Gastrocnemius medialis (tissue), 4 donors: ENCODE measurements at regions of chr1 and their contacts with region 1.

Region 1: GRCh38 chr1:40257688-40258444 is at the start of gene ZMPSTE24:
- DNase-seq: peak; percentile 94 to 97
- ATAC-seq: peak; percentile 98 to 99
- H3K4me3 ChIP-seq: peak within 1 kb of the TSS; percentile 90 to 100 (median 93)
- H3K27ac ChIP-seq: peak within 1 kb of the TSS; percentile 83 to 98 (median 88)
- H3K4me1 ChIP-seq: peaks cover 29 to 45% of the 10 kb centered on the region in 2 donors
- H3K27me3 ChIP-seq: no peaks in the 10 kb centered on the region
- CTCF ChIP-seq: no peak
- POLR2A ChIP-seq: peak; percentile 60 to 69
- total RNA-seq, gene ZMPSTE24: 19.9 to 31.9 (median 24.0) TPM

Region 2: DNA sequence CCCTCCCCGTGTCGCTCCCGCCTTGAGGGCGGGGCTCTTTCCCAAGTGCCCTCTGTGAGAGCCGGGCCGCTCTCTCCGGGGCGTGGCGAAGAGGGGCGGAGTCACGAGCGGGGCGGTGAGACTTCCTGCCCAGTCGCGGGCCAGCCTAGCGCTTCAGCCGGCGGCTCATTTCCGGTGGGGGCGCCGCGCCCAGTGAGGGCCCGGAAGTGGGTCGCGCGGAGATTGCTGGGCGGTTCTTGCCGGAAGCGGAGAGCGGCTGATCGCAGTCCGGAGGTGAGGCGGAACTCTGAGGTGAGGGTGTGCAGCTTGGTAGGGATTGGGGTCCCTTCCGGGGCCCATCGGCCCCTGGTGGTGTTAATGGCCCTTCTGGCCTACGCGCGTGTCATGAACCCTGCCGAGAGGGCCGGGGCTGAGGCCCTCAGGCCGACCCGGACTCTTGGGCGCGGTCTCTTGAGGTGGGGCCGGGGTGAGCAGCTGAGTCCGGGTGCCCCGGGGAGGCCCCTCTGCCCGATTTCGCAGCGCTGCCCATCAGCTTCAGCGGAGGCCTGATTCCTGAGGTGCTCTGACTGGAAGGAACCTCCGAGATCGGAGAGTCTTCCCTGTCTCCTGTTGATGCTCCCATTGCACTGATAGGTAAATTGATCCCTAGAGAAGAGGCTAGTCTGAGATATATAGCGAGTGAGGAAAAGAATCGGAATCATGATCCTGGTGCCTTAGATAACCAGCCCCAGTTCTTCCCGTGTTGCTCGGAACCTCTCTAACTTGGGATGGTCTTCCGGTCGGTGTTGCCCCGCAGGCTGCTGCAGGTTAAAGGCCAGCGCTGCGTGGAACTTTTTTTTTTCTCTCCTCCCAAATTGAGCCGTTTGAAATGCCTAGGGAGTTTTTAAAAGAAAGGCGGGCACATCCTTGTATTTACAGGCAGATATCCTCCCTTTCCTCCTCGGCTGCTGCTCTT is 217.1 kb before region 1 on chr1 and contains the start of gene CAP1:
- in situ Hi-C with region 1: no loop called
- intact Hi-C with region 1: loop called (anchors 5 kb)
- DNase-seq: peak; percentile 98 to 99
- ATAC-seq: peak; percentile 86
- H3K4me3 ChIP-seq: peak within 1 kb of the TSS; percentile 96 to 98 (median 98)
- H3K27ac ChIP-seq: peak within 1 kb of the TSS; percentile 95 to 100 (median 99)
- H3K4me1 ChIP-seq: peaks cover 44 to 59% of the 10 kb centered on the region in 2 donors
- H3K27me3 ChIP-seq: no peaks in the 10 kb centered on the region
- CTCF ChIP-seq: peak in 1 of 5 experiments; percentile 8
- POLR2A ChIP-seq: peak; percentile 72 to 75
- total RNA-seq, gene CAP1: 35.5 to 67.0 (median 48.7) TPM

Region 3: DNA sequence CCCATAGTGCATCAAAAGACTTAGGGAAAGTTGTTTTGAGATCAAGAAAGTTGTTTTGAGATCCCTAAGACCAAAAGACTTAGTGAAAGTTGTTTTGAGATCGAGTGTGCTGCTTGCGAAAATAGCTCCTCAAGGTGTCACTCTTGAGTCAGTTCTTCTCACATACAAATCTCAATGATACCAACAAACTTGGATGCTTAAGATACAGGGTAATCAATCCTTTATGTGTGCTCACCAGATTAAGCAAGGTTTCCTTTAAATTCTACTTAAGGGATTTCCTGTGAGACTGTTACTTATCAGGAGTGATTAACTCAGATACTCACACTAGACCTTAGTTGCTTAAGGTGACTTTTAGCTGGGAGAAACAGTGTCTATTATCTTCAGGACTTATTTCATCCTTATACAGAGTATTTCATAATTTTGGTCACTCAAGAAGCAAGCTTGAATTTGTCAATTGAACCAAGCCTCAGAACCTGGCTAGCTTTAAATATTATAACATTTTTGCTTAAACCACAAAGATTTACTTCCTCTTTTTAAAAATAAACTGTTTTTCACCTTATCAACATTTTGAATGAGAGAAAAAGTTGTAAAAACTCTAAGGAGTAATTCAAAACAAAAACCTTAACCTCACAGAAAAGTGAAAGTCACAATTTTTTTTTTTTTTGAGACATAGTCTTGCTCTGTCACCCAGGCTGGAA is 104.6 kb before region 1 on chr1:
- in situ Hi-C with region 1: loop called in 1 of 4 experiments (anchors 10 kb)
- intact Hi-C with region 1: no loop called
- DNase-seq: no peak
- ATAC-seq: peak in 1 of 2 donors; percentile 51
- H3K4me3 ChIP-seq: no peak overlapping the region
- H3K27ac ChIP-seq: no peak overlapping the region
- H3K4me1 ChIP-seq: peaks cover 0 to 3% of the 10 kb centered on the region in 2 donors
- H3K27me3 ChIP-seq: no peaks in the 10 kb centered on the region
- CTCF ChIP-seq: peak in 4 of 5 experiments; percentile 14 to 72 (median 58)
- POLR2A ChIP-seq: no peak

Region 4: DNA sequence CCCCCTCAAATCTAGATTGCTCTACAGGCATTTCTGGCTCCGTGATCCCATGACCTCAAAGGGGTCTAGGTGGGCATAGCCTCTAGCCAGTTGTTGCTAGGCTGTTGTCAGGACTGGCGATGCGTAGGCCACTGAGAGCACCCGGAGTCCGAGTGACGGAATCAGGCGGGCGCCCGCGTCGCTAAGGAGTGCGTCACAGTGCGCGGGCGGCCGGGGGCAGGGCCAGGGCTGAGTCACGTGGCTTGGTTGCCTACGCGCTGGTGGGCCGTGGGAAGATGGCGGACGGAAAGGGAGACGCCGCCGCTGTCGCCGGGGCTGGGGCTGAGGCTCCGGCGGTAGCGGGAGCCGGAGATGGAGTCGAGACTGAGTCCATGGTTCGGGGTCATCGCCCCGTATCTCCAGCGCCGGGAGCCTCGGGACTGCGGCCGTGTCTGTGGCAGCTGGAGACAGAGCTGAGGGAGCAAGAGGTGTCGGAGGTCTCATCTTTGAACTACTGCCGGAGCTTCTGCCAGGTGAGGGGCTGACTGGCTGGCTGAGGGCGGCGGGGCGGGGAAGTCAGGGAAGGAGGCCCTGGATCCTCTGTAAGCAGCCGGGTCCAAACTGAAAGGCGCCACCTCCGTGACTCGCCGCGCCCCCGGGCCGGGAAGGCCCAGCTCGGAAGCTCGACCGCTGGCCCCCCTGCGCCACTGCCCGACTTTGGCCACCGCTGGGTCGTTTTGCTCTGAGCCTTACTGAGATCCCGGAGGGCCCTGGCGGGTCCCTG is 96.6 kb before region 1 on chr1 and contains the start of gene RLF:
- in situ Hi-C with region 1: loop called in 3 of 4 experiments (anchors 5 to 10 kb)
- intact Hi-C with region 1: loop called (anchors 2 kb)
- DNase-seq: peak; percentile 88 to 92
- ATAC-seq: peak; percentile 95 to 97
- H3K4me3 ChIP-seq: peak within 1 kb of the TSS; percentile 73 to 98 (median 89)
- H3K27ac ChIP-seq: peak within 1 kb of the TSS; percentile 92 to 99 (median 96)
- H3K4me1 ChIP-seq: peaks cover 44 to 45% of the 10 kb centered on the region in 2 donors
- H3K27me3 ChIP-seq: no peaks in the 10 kb centered on the region
- CTCF ChIP-seq: no peak
- POLR2A ChIP-seq: peak; percentile 97 to 98
- total RNA-seq, gene RLF: 12.3 to 15.9 (median 15.0) TPM

Region 5: GRCh38 chr1:40197656-40198055 is 60.2 kb before region 1 on chr1:
- in situ Hi-C with region 1: no loop called
- intact Hi-C with region 1: no loop called
- DNase-seq: no peak
- ATAC-seq: no peak
- H3K4me3 ChIP-seq: no peak overlapping the region
- H3K27ac ChIP-seq: no peak overlapping the region
- H3K4me1 ChIP-seq: no peaks in the 10 kb centered on the region
- H3K27me3 ChIP-seq: no peaks in the 10 kb centered on the region
- CTCF ChIP-seq: no peak
- POLR2A ChIP-seq: no peak

Region 6: GRCh38 chr1:40373338-40374283 is 115.7 kb after region 1 on chr1 and contains the start of gene SMAP2:
- in situ Hi-C with region 1: no loop called
- intact Hi-C with region 1: loop called (anchors 5 kb)
- DNase-seq: peak; percentile 93 to 95
- ATAC-seq: peak; percentile 91 to 94
- H3K4me3 ChIP-seq: peak within 1 kb of the TSS; percentile 90 to 98 (median 95)
- H3K27ac ChIP-seq: peak within 1 kb of the TSS; percentile 82 to 93 (median 86)
- H3K4me1 ChIP-seq: peaks cover 7 to 18% of the 10 kb centered on the region in 2 donors
- H3K27me3 ChIP-seq: no peaks in the 10 kb centered on the region
- CTCF ChIP-seq: no peak
- POLR2A ChIP-seq: peak; percentile 79 to 82
- total RNA-seq, gene SMAP2: 14.9 to 121 (median 47.5) TPM

Region 7: DNA sequence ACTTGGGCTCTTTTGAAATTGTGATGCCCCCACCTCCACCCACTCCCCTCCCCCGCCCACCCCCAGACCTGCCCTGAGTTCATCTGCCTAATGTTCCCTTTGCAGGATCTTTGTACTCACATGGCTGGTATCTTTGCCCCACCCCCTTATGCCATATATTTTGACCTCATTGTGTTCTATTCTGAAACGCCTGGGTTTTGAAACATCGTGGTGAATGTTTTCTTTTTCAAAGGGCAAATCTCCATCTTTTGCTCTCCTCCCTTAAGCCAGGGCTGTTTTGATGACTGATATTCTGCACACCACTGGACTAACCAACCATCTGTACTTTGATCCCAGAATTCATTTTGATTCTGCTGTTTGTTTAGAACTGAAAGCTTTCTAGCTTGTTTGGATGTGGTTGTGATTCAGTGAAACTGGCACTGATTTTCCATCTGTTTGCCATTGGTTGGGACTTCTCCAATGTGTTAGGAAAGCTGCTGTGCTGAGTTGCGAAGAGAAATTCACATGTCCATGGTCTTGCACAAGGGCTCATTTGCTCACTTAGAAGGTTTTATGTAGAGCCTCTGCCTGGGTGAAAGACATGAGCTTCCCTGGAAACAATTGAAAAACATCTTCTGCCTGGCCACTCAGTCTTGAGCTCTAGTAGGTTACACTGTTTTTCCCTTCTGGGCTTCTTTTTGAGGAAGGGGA is 132.2 kb after region 1 on chr1:
- in situ Hi-C with region 1: no loop called
- intact Hi-C with region 1: loop called (anchors 5 kb)
- DNase-seq: peak; percentile 56 to 73
- ATAC-seq: peak; percentile 85 to 89
- H3K4me3 ChIP-seq: peak overlapping the region in 2 of 4 donors; percentile 9 to 29
- H3K27ac ChIP-seq: peak overlapping the region; percentile 77 to 90 (median 84)
- H3K4me1 ChIP-seq: peaks cover 36 to 49% of the 10 kb centered on the region in 2 donors
- H3K27me3 ChIP-seq: no peaks in the 10 kb centered on the region
- CTCF ChIP-seq: no peak
- POLR2A ChIP-seq: peak; percentile 33 to 52